ENCODE measurements at regions of chr11 and their contacts with region 1.

Region 1: GRCh38 chr11:66001942-66002647 is at the starts of genes BANF1 and EIF1AD:
- DNase-seq: peak; percentile 75 to 96 (median 94)
- ATAC-seq: peak; percentile 92
- H3K4me3 ChIP-seq: peak within 1 kb of the TSS; percentile 100
- H3K4me3 Mint-ChIP-seq: peak within 1 kb of the TSS; percentile 97 to 100 (median 99)
- H3K27ac ChIP-seq: peak within 1 kb of the TSS; percentile 92
- H3K27ac Mint-ChIP-seq: peak within 1 kb of the TSS; percentile 96 to 100 (median 98)
- H3K4me1 ChIP-seq: peaks cover 8 to 14% of the 10 kb centered on the region in 2 donors
- H3K4me1 Mint-ChIP-seq: peaks cover 21 to 58% (median 52%) of the 10 kb centered on the region in 7 donors
- H3K27me3 ChIP-seq: no peaks in the 10 kb centered on the region
- H3K27me3 Mint-ChIP-seq: no peaks in the 10 kb centered on the region
- total RNA-seq, gene BANF1: 54.5 to 234 (median 99.4) TPM
- total RNA-seq, gene EIF1AD: 49.9 to 114 (median 66.7) TPM

Region 2: GRCh38 chr11:65720237-65720934 is 281.7 kb before region 1 on chr11 and contains the start of gene RNASEH2C:
- CTCF ChIA-PET with region 1: no interaction called
- POLR2A ChIA-PET with region 1: no interaction called
- intact Hi-C with region 1: loop called (anchors 1 kb)
- DNase-seq: peak; percentile 64 to 83 (median 72)
- ATAC-seq: peak; percentile 95
- H3K4me3 ChIP-seq: peak within 1 kb of the TSS; percentile 70
- H3K4me3 Mint-ChIP-seq: peak within 1 kb of the TSS; percentile 83 to 98 (median 92)
- H3K27ac ChIP-seq: peak within 1 kb of the TSS; percentile 79
- H3K27ac Mint-ChIP-seq: peak within 1 kb of the TSS; percentile 57 to 91 (median 88)
- H3K4me1 ChIP-seq: peaks cover 14 to 16% of the 10 kb centered on the region in 2 donors
- H3K4me1 Mint-ChIP-seq: peaks cover 14 to 41% (median 31%) of the 10 kb centered on the region in 7 donors
- H3K27me3 ChIP-seq: no peaks in the 10 kb centered on the region
- H3K27me3 Mint-ChIP-seq: peaks cover 0 to 2% (median 0%) of the 10 kb centered on the region in 5 donors
- total RNA-seq, gene RNASEH2C: 41.8 to 94.0 (median 82.0) TPM

Region 3: DNA sequence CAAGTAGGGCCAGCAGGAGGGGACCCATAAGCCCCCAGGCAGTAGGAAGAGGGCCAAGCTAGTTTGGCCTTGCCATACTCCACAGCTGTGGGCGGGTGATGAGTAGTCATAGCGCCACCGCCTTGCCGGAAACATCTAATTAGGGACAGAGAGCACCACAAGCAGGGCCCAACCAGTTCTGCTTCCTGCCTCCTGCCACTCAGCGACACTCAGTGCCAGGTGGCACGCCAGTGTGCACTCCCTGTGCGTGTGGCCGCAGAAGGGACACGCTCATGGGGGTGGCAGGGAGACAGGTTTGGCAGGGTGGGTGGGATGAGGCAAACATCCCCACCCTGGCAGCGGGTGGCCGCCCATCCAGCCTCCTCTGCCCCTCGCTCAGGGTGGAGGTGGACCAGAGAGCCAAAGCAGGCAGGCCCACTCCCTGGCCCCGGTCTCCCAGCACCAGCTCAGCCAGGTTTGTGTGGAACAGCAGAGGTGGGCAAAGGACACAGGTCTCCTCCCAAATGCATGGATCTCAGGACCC is 210.3 kb before region 1 on chr11:
- CTCF ChIA-PET with region 1: no interaction called
- POLR2A ChIA-PET with region 1: no interaction called
- intact Hi-C with region 1: no loop called
- DNase-seq: peak in 2 of 9 donors; percentile 32 to 67
- ATAC-seq: peak; percentile 82
- H3K4me3 ChIP-seq: no peak overlapping the region
- H3K4me3 Mint-ChIP-seq: no peak overlapping the region
- H3K27ac ChIP-seq: no peak overlapping the region
- H3K27ac Mint-ChIP-seq: peak overlapping the region in 1 of 9 donors; percentile 76
- H3K4me1 ChIP-seq: peaks cover 9 to 10% of the 10 kb centered on the region in 2 donors
- H3K4me1 Mint-ChIP-seq: peaks cover 0 to 29% (median 11%) of the 10 kb centered on the region in 7 donors
- H3K27me3 ChIP-seq: peaks cover 10 to 12% of the 10 kb centered on the region in 2 donors
- H3K27me3 Mint-ChIP-seq: peaks cover 22 to 37% (median 27%) of the 10 kb centered on the region in 5 donors

Region 4: GRCh38 chr11:65919146-65920033 is 82.7 kb before region 1 on chr11 and contains the start of gene DRAP1:
- CTCF ChIA-PET with region 1: no interaction called
- POLR2A ChIA-PET with region 1: no interaction called
- intact Hi-C with region 1: loop called (anchors 1 kb)
- DNase-seq: peak; percentile 95 to 98 (median 97)
- ATAC-seq: peak; percentile 93
- H3K4me3 ChIP-seq: peak within 1 kb of the TSS; percentile 83
- H3K4me3 Mint-ChIP-seq: peak within 1 kb of the TSS; percentile 86 to 96 (median 93)
- H3K27ac ChIP-seq: peak within 1 kb of the TSS; percentile 95
- H3K27ac Mint-ChIP-seq: peak within 1 kb of the TSS; percentile 79 to 96 (median 90)
- H3K4me1 ChIP-seq: peaks cover 26 to 28% of the 10 kb centered on the region in 2 donors
- H3K4me1 Mint-ChIP-seq: peaks cover 32 to 61% (median 36%) of the 10 kb centered on the region in 7 donors
- H3K27me3 ChIP-seq: no peaks in the 10 kb centered on the region
- H3K27me3 Mint-ChIP-seq: no peaks in the 10 kb centered on the region
- total RNA-seq, gene DRAP1: 72.6 to 166 (median 81.9) TPM

Region 5: GRCh38 chr11:66022401-66023185 is 20.5 kb after region 1 on chr11:
- CTCF ChIA-PET with region 1: interaction called, 4 read pairs
- POLR2A ChIA-PET with region 1: interaction called, 4 read pairs
- intact Hi-C with region 1: loop called (anchors 1 kb)
- DNase-seq: peak; percentile 52 to 89 (median 69)
- ATAC-seq: peak; percentile 92
- H3K4me3 ChIP-seq: peak overlapping the region; percentile 39
- H3K4me3 Mint-ChIP-seq: peak overlapping the region in 9 of 10 donors; percentile 4 to 73 (median 45)
- H3K27ac ChIP-seq: no peak overlapping the region
- H3K27ac Mint-ChIP-seq: peak overlapping the region in 1 of 9 donors; percentile 59
- H3K4me1 ChIP-seq: peaks cover 0 to 5% of the 10 kb centered on the region in 2 donors
- H3K4me1 Mint-ChIP-seq: peaks cover 4 to 17% (median 5%) of the 10 kb centered on the region in 7 donors
- H3K27me3 ChIP-seq: no peaks in the 10 kb centered on the region
- H3K27me3 Mint-ChIP-seq: peaks cover 0 to 9% (median 4%) of the 10 kb centered on the region in 5 donors

Region 6: DNA sequence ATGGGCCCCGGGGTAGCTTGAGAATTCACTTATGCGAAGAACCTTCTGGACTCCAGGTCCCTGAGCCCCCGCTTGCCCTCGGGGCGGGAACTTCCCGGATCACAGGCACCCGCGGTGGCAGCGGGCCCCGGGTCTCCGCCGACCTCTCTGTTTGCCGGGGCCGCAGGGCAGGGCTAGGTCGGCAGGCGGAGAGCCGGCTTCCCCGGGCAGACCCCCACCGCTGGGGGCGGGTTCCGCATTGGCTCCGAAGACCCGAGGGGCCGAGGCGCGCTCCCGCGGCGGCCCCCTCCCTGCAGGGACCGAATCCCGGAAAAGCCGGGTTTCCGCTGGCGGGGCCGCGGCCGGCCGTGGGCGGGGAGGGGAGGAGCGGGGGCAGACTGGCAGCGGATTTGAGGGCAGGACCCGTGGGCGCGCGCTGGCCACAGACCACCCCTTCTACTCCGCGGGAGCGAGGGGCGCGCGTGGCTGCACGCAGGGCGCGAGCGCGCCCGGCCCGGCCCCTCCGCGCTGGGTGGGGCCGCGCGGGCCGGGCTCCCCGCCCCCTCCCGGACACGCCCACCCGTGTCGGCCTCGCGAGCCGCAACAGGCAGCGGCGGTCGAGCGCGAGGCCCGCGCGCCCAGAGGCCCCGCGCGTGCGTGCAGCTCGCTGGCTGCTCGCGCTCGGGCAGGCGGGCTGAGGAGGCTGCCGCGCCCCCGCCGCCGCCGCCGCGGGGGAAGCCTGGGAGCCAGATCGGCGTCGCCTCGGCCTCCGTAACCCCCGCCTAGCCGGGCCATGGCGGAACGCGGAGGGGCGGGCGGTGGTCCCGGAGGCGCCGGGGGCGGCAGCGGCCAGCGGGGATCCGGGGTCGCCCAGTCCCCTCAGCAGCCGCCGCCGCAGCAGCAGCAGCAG is 67.9 kb after region 1 on chr11 and contains the start of gene PACS1:
- CTCF ChIA-PET with region 1: interaction called, 3 read pairs
- POLR2A ChIA-PET with region 1: interaction called, 6 read pairs
- intact Hi-C with region 1: loop called in 1 of 2 experiments (anchors 2 kb)
- DNase-seq: peak; percentile 64 to 85 (median 70)
- ATAC-seq: peak; percentile 85
- H3K4me3 ChIP-seq: peak within 1 kb of the TSS; percentile 69
- H3K4me3 Mint-ChIP-seq: peak within 1 kb of the TSS; percentile 91 to 100 (median 98)
- H3K27ac ChIP-seq: peak within 1 kb of the TSS; percentile 84
- H3K27ac Mint-ChIP-seq: peak within 1 kb of the TSS; percentile 90 to 99 (median 97)
- H3K4me1 ChIP-seq: peaks cover 23 to 24% of the 10 kb centered on the region in 2 donors
- H3K4me1 Mint-ChIP-seq: peaks cover 54 to 73% (median 63%) of the 10 kb centered on the region in 7 donors
- H3K27me3 ChIP-seq: no peaks in the 10 kb centered on the region
- H3K27me3 Mint-ChIP-seq: no peaks in the 10 kb centered on the region
- total RNA-seq, gene PACS1: 100 to 314 (median 252) TPM